PC-9 (cell line): ENCODE measurements at regions of chr19 and their contacts with region 1.

Region 1: DNA sequence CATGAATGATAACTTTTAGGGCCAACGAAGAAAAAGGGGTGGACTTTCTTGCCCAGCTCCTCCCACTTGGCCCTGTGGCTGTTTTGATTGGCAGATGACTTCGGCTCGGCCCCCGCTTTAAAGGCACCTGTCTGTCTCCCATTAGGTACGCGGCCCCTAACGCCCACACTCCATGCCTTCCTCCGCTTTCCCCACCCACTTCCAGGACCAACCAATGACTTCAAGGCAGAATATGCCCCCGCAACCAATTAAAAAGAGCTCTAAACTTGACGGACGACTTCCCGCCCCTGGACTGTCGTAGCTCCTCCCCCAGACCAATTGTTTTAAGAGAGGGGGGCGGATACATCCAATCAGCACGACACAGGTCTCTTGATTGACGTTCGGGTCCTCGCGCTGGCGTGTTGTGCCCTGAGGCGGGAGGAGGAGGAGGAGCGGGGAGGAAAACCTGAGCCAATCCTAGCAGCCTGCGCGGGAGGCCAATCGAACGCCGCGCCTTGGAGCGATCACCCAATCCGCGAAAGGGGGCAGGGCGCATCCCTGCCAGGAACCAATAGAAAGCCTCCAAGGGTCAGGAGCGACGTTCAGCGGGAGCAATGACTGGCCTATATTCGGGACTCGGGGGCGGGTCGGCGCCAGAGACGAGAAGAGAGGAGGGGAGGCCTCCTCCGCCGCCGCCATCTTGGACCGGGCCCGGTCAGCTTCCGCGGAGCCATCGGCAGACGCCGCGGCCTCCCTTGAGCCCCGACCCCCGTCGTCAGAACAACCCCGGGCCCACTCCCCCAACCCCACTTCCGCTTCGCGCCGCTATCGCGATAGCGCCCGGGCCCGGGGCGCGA is at the start of gene CNOT3:
- DNase-seq: peak; percentile 100
- H3K4me3 ChIP-seq: peak within 1 kb of the TSS; percentile 83
- H3K27ac ChIP-seq: peak within 1 kb of the TSS; percentile 82
- H3K4me1 ChIP-seq: peaks cover 26% of the 10 kb centered on the region; the same call in 1 of the 2 replicates
- H3K27me3 ChIP-seq: no peaks in the 10 kb centered on the region
- CTCF ChIP-seq: no peak
- total RNA-seq, gene CNOT3: 83.0 and 89.1 TPM in 2 replicates

Region 2: GRCh38 chr19:53879140-53880081 is 257.9 kb before region 1 on chr19:
- CTCF ChIA-PET with region 1: no interaction called
- POLR2A ChIA-PET with region 1: interaction called, 15 read pairs
- intact Hi-C with region 1: no loop called
- DNase-seq: peak; percentile 70 to 96
- H3K4me3 ChIP-seq: peak overlapping the region; percentile 59
- H3K27ac ChIP-seq: no peak overlapping the region
- H3K4me1 ChIP-seq: peaks cover 22% of the 10 kb centered on the region
- H3K27me3 ChIP-seq: no peaks in the 10 kb centered on the region
- CTCF ChIP-seq: no peak

Region 3: DNA sequence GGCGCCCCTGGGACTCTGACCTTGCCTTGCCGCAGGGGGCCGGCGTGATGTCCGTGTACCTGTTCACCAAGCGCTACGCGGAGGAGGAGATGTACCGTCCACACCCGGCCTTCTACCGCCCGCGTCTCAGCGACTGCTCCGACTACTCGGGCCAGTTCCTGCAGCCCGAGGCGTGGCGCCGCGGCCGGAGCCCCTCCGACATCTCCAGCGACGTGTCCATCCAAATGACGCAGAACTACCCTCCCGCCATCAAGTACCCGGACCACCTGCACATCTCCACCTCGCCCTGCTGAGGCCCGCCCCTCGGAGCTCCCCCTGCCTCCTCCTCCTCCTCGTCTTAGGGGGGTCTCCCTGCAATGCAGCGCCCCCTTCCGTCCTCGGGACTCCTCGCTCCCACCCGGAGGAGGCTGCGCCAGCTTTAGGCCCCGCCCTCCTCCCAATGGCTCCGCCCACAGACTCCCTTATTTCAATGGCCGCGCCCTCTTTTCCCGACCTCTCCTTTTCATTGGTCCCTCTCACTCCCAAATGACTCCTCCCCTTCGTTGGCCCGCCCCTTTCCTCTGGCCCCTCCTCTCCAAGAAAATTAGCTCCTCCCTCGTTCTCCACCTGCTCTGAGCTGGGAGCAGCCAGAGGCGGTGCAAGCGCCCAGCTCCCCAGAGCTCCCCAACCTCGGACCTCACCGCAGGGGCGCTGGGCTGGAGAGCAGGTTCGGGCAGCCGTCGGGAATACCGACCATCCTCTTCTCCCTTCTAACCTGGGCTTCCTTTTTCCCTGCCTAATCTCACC is 195.1 kb before region 1 on chr19:
- CTCF ChIA-PET with region 1: no interaction called
- POLR2A ChIA-PET with region 1: no interaction called
- intact Hi-C with region 1: no loop called
- DNase-seq: no peak
- H3K4me3 ChIP-seq: no peak overlapping the region
- H3K27ac ChIP-seq: no peak overlapping the region
- H3K4me1 ChIP-seq: no peaks in the 10 kb centered on the region
- H3K27me3 ChIP-seq: no peaks in the 10 kb centered on the region
- CTCF ChIP-seq: no peak

Region 4: DNA sequence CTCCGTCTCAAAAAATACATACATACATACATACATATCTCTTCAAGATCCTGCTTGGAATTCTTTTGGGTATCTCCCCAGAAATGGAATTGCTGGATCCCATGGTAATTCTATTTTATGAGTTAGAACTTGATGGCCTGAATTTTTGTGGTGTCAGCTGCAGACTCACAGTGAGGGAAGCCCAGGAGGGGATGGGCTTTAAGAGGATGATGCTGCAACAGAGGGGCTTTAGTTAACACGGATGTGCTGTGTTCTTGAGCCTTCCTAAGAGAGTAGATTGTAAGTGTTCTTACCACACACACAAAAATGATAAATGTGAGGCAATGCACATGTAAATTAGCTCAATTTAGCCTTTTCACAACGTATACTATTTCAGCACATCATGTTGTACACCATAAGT is 114.1 kb before region 1 on chr19:
- CTCF ChIA-PET with region 1: interaction called, 15 read pairs
- POLR2A ChIA-PET with region 1: no interaction called
- intact Hi-C with region 1: no loop called
- DNase-seq: no peak
- H3K4me3 ChIP-seq: no peak overlapping the region
- H3K27ac ChIP-seq: no peak overlapping the region
- H3K4me1 ChIP-seq: peaks cover 51% of the 10 kb centered on the region
- H3K27me3 ChIP-seq: no peaks in the 10 kb centered on the region
- CTCF ChIP-seq: no peak

Region 5: DNA sequence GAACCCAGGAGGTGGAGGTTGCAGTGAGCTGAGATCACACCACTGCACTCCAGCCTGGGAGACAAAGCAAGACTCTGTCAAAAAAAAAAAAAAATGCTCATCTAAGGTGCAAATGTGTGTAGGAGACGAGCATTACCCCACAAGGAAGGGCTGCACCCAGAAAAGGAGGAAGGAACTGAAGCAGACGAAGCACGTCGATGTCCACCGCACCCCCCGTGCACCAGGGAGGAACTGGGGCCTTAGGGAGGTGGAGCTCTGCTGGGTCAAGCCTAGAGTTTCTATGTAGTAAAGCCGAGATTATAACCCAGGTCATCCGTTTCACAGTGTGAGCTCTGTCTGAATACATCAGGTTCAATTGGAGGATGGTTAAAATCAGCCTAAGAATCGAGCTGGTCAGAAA is 74.7 kb before region 1 on chr19:
- CTCF ChIA-PET with region 1: no interaction called
- POLR2A ChIA-PET with region 1: interaction called, 10 read pairs
- intact Hi-C with region 1: no loop called
- DNase-seq: no peak
- H3K4me3 ChIP-seq: no peak overlapping the region
- H3K27ac ChIP-seq: no peak overlapping the region
- H3K4me1 ChIP-seq: no peaks in the 10 kb centered on the region
- H3K27me3 ChIP-seq: peaks cover 35% of the 10 kb centered on the region
- CTCF ChIP-seq: no peak

Region 6: GRCh38 chr19:54115109-54116063 is 21.9 kb before region 1 on chr19 and contains the starts of genes PRPF31 and TFPT:
- CTCF ChIA-PET with region 1: no interaction called
- POLR2A ChIA-PET with region 1: interaction called, 13 read pairs
- intact Hi-C with region 1: no loop called
- DNase-seq: peak; percentile 94 to 95
- H3K4me3 ChIP-seq: peak within 1 kb of the TSS; percentile 78
- H3K27ac ChIP-seq: peak within 1 kb of the TSS; percentile 63
- H3K4me1 ChIP-seq: peaks cover 14% of the 10 kb centered on the region
- H3K27me3 ChIP-seq: no peaks in the 10 kb centered on the region
- CTCF ChIP-seq: no peak
- total RNA-seq, gene PRPF31: 86.1 and 109 TPM in 2 replicates
- total RNA-seq, gene TFPT: 35.8 and 47.4 TPM in 2 replicates

Region 7: GRCh38 chr19:54189735-54190502 is 52.6 kb after region 1 on chr19:
- CTCF ChIA-PET with region 1: interaction called, 7 read pairs
- POLR2A ChIA-PET with region 1: interaction called, 36 read pairs
- intact Hi-C with region 1: loop called (anchors 1 kb)
- DNase-seq: peak; percentile 100
- H3K4me3 ChIP-seq: peak overlapping the region; percentile 77
- H3K27ac ChIP-seq: peak overlapping the region; percentile 93
- H3K4me1 ChIP-seq: peaks cover 24% of the 10 kb centered on the region
- H3K27me3 ChIP-seq: no peaks in the 10 kb centered on the region
- CTCF ChIP-seq: no peak